Posterior vena cava (tissue), 2 donors: ENCODE measurements at regions of chr7 and their contacts with region 1.

Region 1: DNA sequence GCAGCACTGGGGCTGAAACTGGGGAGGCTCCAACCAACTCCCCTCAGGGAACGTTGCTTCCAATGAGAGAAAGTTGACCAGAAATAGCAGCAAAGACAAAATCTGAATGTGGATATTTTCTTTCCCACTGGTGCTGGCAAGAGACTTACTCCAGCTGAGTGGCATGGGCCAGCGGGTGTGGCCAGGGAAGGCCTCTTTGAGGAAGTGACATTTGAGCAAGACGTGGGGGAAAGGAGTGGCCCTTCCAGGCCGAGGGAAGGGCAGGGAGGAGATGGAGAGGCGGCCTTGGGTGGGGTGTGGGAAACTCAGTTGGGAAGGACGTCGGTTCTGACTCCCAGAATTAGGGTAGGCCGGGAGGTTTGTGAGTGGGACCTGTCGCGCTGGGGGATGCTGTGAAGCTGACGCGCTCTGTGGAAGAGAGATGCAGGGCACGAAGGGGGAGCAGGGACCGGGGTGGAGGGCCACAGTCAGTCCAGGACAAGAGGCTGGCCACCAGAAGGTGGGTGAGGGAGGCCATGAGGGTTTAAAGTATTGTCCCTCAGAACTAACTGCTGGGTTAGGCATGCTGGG is 96.7 kb upstream of the IKZF1 start:
- DNase-seq: no peak

Region 2: DNA sequence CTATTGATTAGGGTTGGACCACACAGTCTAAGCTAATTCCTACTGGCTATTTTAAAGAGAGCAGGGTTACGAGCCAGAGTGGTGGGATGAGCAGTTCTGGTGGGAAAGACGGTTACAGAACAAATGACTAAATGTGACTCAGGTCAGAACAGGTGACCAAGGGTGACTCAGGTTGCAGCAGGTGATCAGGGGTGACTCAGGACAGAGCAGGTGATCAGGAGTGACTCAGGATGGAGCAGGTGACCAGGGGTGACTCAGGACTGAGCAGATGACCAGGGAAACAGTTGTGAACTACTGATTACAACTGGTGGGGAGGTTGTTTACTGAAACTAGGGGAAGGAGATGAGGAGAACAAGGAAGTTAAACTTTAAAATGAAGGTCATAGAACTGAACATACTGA is 1670.2 kb before region 1 on chr7:
- intact Hi-C with region 1: no loop called
- DNase-seq: no peak

Region 3: GRCh38 chr7:50174948-50175347 is 32.8 kb before region 1 on chr7:
- intact Hi-C with region 1: loop called in 1 of 2 experiments (anchors 1 kb)
- DNase-seq: no peak